Caco-2 (cell line): ENCODE measurements at regions of chr11 and their contacts with region 1.

Region 1: DNA sequence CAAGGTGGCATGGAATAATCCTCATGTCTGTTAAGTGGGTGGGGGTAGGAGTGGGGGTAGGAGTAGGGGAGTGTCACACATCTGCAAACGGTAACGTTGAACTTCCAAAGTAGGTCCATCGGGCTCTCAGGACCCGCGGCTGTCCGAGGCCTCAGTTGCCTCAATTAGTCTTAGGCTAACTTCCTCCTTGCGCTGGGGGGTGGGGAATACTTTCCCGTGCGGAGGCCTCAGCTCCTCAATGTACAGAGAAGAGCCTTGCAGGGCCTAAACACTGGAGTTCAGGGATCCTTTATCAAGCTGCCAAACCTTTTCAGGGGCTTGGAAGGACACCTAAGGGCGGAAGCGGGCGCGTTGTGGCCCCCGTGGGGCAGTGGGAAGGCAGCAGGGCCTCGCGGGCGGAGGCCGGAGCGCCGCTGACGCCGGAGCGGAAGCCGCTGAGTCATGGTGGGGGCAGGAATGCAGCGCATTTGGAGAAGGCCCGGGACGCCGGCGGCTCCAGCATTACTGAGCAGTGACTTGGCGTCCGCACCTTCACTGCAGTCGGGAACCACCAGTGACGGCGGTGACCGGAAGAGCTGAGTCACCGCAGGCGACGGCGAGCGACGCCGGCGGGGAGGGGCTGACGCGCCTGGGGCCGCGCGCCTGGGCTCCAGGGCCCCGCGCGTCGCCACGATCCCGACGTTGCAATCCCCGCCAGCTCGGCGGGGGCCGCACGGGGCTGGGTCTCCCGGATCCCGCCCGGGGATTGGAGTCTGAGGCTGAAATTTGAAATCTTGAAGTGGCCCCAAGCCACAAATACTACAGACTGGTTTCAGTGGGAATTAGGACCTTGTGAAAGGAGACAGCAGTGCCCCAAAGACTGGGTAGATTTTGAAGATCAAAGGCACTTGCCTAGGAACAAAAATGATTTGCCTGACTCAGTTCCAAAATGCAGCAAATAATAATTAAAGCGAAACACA is 20.2 kb upstream of the IPO7 start:
- DNase-seq: peak; percentile 98
- H3K4me3 ChIP-seq: peak overlapping the region; percentile 57
- H3K4me3 Mint-ChIP-seq: peak overlapping the region; percentile 71
- H3K27ac Mint-ChIP-seq: peak overlapping the region; percentile 96
- H3K4me1 ChIP-seq: peaks cover 31% of the 10 kb centered on the region
- H3K4me1 Mint-ChIP-seq: peaks cover 17% of the 10 kb centered on the region
- H3K27me3 ChIP-seq: no peaks in the 10 kb centered on the region
- H3K27me3 Mint-ChIP-seq: no peaks in the 10 kb centered on the region
- CTCF ChIP-seq: no peak

Region 2: DNA sequence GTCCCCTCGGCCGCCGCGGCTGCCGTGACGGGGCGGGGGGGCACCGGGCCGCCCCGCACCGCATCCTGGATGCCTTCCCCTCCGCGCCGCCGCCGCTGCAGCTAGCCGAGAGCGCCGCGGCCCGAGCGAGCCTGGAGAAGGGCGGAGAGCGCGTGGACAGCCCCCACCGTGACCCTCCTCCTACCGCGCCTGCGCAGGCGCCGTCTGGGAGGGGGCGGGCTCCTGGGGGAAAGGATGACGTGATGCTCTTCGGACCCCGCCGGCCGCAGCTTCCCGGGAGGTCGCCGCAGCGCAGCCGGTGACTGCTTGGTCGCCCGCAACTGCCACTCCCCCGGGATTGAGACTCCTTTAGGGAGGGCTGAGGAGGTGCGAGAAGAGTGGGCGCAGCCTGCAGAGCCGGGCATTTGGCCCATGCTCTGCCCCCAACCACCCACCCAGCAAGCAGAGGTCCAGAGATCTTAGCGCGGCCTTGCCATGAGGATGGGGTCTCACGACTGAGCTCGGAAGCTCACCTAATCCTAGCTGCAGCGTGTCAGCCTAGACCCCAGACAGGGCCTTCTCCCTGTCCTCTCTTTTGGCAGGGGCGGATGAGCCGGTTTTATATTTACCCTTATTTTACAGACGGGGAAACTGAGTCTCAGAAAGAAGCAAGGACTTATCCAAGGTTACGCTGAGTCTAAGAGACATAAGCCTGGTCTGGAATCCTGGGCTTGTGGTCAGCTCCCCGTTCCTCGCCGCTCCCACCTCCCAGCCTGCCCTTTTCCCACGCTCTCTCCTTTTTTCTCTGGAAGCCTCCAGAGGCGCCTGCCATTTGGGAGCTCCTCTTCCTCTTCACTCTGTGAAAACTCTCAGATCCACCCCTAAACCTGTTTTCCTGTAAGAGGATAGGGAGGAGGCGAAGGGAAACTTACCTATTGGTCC is 98.8 kb before region 1 on chr11 and contains the start of gene DENND5A:
- CTCF ChIA-PET with region 1: no interaction called
- POLR2A ChIA-PET with region 1: no interaction called
- intact Hi-C with region 1: loop called (anchors 5 kb)
- DNase-seq: peak; percentile 84 to 91
- H3K4me3 ChIP-seq: peak within 1 kb of the TSS; percentile 83
- H3K4me3 Mint-ChIP-seq: peak within 1 kb of the TSS; percentile 94
- H3K27ac Mint-ChIP-seq: peak within 1 kb of the TSS; percentile 95
- H3K4me1 ChIP-seq: peaks cover 30% of the 10 kb centered on the region
- H3K4me1 Mint-ChIP-seq: peaks cover 47% of the 10 kb centered on the region
- H3K27me3 ChIP-seq: no peaks in the 10 kb centered on the region
- H3K27me3 Mint-ChIP-seq: no peaks in the 10 kb centered on the region
- CTCF ChIP-seq: no peak
- total RNA-seq, gene DENND5A: 54.3 and 58.0 TPM in 2 replicates

Region 3: DNA sequence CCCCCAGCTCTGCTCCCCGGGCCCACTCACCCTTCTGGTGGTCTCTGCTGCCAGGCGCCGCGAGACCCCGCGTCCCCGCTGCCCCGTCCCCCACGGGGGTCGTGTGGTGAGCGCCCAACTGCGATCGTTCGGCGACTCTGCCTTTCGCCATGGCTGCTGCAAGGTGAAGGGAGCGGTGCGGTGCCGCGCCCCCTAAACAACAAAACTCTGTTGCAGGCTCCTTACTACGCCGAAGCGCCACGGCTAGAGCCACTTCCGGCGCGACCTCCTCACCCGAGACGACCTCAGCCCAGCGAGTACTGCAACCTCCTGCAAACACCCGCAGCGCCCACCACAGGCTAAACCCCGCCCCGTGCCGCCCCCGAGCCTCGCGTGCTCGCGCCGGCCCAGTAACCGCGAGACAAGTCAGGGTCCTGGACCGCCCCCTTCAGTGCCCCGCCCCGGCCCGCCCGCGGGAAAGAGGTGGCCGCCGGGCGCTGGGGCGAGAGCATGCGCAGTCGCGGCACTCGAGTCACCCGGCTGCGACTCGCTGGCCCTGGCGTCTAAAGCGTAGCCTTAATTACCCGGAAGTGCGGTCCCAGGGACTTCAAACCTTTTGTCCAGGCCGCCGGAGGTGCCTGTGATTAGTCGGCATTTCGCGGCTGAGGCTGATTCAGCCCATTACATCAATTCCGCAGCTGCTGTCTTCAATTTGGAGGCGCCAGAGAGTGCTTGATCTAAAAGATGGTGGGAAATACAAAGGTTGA is 49.8 kb before region 1 on chr11 and contains the start of gene TMEM41B:
- CTCF ChIA-PET with region 1: interaction called, 3 read pairs
- POLR2A ChIA-PET with region 1: interaction called, 11 read pairs
- intact Hi-C with region 1: loop called (anchors 1 kb)
- DNase-seq: peak; percentile 98 to 99
- H3K4me3 ChIP-seq: peak within 1 kb of the TSS; percentile 98
- H3K4me3 Mint-ChIP-seq: peak within 1 kb of the TSS; percentile 87
- H3K27ac Mint-ChIP-seq: peak within 1 kb of the TSS; percentile 99
- H3K4me1 ChIP-seq: peaks cover 37% of the 10 kb centered on the region
- H3K4me1 Mint-ChIP-seq: peaks cover 24% of the 10 kb centered on the region
- H3K27me3 ChIP-seq: no peaks in the 10 kb centered on the region
- H3K27me3 Mint-ChIP-seq: no peaks in the 10 kb centered on the region
- CTCF ChIP-seq: peak in 1 of 2 experiments; percentile 16
- total RNA-seq, gene TMEM41B: 103 and 110 TPM in 2 replicates

Region 4: GRCh38 chr11:9384535-9385303 is 20.5 kb after region 1 on chr11 and contains the start of gene IPO7:
- CTCF ChIA-PET with region 1: interaction called, 12 read pairs
- POLR2A ChIA-PET with region 1: interaction called, 15 read pairs
- intact Hi-C with region 1: loop called (anchors 1 kb)
- DNase-seq: peak; percentile 92 to 93
- H3K4me3 ChIP-seq: peak within 1 kb of the TSS; percentile 90
- H3K4me3 Mint-ChIP-seq: peak within 1 kb of the TSS; percentile 94
- H3K27ac Mint-ChIP-seq: peak within 1 kb of the TSS; percentile 98
- H3K4me1 ChIP-seq: peaks cover 30% of the 10 kb centered on the region
- H3K4me1 Mint-ChIP-seq: peaks cover 29% of the 10 kb centered on the region
- H3K27me3 ChIP-seq: no peaks in the 10 kb centered on the region
- H3K27me3 Mint-ChIP-seq: no peaks in the 10 kb centered on the region
- CTCF ChIP-seq: peak; percentile 20 to 44
- total RNA-seq, gene IPO7: 196 and 199 TPM in 2 replicates

Region 5: GRCh38 chr11:9565822-9566560 is 201.8 kb after region 1 on chr11:
- CTCF ChIA-PET with region 1: no interaction called
- POLR2A ChIA-PET with region 1: no interaction called
- intact Hi-C with region 1: loop called (anchors 5 kb)
- DNase-seq: peak; percentile 90 to 91
- H3K4me3 ChIP-seq: no peak overlapping the region
- H3K4me3 Mint-ChIP-seq: peak overlapping the region; percentile 57
- H3K27ac Mint-ChIP-seq: peak overlapping the region; percentile 100
- H3K4me1 ChIP-seq: peaks cover 56% of the 10 kb centered on the region
- H3K4me1 Mint-ChIP-seq: peaks cover 54% of the 10 kb centered on the region
- H3K27me3 ChIP-seq: no peaks in the 10 kb centered on the region
- H3K27me3 Mint-ChIP-seq: no peaks in the 10 kb centered on the region
- CTCF ChIP-seq: no peak